Mammary epithelial cell (primary cell): ENCODE measurements at regions of chr6 and their contacts with region 1.

Region 1: GRCh38 chr6:151044465-151045441 is 179.3 kb downstream of the MTHFD1L start:
- DNase-seq: no peak
- H3K4me3 ChIP-seq: no peak overlapping the region
- H3K27ac ChIP-seq: no peak overlapping the region
- H3K4me1 ChIP-seq: peaks cover 31% of the 10 kb centered on the region
- H3K27me3 ChIP-seq: no peaks in the 10 kb centered on the region
- CTCF ChIP-seq: no peak

Region 2: GRCh38 chr6:150987371-150987828 is 57.4 kb before region 1 on chr6:
- CTCF ChIA-PET with region 1: no interaction called
- dilution Hi-C with region 1: no loop called
- in situ Hi-C with region 1: no loop called
- intact Hi-C with region 1: no loop called
- DNase-seq: peak; percentile 6
- H3K4me3 ChIP-seq: no peak overlapping the region
- H3K27ac ChIP-seq: no peak overlapping the region
- H3K4me1 ChIP-seq: no peaks in the 10 kb centered on the region
- H3K27me3 ChIP-seq: no peaks in the 10 kb centered on the region
- CTCF ChIP-seq: no peak

Region 3: DNA sequence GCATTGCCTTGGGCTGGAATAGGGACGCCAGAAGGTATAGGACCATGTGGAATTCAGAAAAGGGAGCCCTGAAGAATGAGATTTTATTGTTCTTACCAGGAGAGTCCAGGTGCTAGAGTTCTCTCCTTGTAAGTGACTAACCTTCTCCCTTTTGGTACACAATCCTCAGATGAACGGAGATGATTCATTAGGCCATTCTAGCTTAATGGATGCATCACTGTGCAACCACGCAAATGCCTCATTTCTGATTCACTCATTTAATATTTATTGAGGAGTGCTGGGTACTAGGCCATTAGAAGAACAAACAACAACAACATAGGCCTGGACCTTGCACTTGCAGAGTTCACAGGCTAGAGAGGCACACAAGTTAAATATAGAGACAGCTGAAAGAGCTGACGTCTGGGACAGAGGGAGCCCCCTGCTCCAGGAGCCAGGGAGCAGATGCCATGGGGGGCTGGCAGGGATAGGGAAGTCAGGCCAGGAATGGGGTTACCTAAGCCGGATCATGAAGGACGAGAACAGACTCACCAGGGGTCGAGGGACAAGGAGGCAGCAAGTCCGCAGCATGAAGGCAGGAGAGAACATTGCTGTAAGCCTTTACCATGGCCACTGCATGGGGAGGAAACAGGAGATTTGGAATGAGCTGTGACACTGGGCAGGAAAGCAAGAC is 15.5 kb after region 1 on chr6:
- CTCF ChIA-PET with region 1: no interaction called
- dilution Hi-C with region 1: no loop called
- in situ Hi-C with region 1: no loop called
- intact Hi-C with region 1: loop called (anchors 1 kb)
- DNase-seq: peak; percentile 95
- H3K4me3 ChIP-seq: no peak overlapping the region
- H3K27ac ChIP-seq: peak overlapping the region; percentile 96
- H3K4me1 ChIP-seq: peaks cover 42% of the 10 kb centered on the region
- H3K27me3 ChIP-seq: no peaks in the 10 kb centered on the region
- CTCF ChIP-seq: no peak

Region 4: DNA sequence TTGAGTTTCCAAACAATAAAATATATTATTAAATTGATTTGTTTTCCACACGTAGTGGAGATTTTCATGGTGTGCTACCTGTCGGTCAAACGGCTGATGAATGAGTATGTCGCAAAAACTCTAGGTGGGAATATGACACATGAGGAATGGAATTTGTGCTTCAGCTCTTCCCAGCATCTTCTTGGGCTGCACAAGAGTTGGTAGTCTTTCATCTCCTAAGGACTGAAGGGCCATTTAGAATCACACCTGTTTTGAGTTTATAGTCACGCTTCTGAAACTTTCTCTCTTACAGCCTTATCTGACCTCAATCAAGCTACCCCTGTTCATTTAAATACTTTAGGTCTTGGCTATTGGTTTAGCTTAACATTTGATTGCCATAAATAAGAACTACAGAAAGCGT is 37.3 kb after region 1 on chr6:
- CTCF ChIA-PET with region 1: no interaction called
- dilution Hi-C with region 1: no loop called
- in situ Hi-C with region 1: no loop called
- intact Hi-C with region 1: loop called (anchors 5 kb)
- DNase-seq: peak; percentile 64
- H3K4me3 ChIP-seq: no peak overlapping the region
- H3K27ac ChIP-seq: peak overlapping the region; percentile 62
- H3K4me1 ChIP-seq: peaks cover 20% of the 10 kb centered on the region
- H3K27me3 ChIP-seq: no peaks in the 10 kb centered on the region
- CTCF ChIP-seq: no peak

Region 5: GRCh38 chr6:151121900-151122299 is 77.1 kb after region 1 on chr6:
- CTCF ChIA-PET with region 1: no interaction called
- dilution Hi-C with region 1: no loop called
- in situ Hi-C with region 1: no loop called
- intact Hi-C with region 1: no loop called
- DNase-seq: no peak
- H3K4me3 ChIP-seq: no peak overlapping the region
- H3K27ac ChIP-seq: no peak overlapping the region
- H3K4me1 ChIP-seq: peaks cover 12% of the 10 kb centered on the region
- H3K27me3 ChIP-seq: no peaks in the 10 kb centered on the region
- CTCF ChIP-seq: no peak